ENCODE measurements at regions of chr2 and their contacts with region 1.

Region 1: DNA sequence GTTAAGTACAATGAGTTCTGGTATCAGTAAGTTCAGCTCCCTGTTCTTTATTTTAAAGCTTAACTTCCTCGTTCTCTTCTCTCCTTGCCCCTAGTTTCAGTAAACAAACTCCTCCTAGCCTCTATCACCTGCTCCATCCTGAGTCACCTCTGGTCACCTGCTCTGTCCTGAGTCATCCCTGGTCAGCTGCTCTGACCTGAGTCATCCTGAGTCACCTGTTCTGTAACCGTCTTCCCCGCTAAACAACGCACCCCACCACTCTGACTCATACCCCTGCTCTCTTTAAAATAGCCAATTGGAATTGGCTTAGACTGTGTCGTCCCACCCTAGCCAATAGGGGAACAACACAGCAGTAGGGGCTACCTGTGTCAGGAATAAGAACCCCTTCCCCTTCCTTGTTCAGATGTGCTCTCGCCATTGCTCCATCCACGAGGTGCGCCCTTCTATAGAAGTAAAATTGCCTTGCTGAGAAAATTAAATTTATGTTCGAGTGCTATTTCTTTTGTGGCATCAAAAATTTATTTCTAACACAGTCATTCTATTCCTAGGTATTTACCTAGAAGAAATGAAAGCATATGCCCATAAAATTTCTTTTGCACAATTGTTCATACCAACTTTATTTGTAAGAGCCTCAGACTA is 24.9 kb upstream of the RMND5A start:
- DNase-seq: no peak
- ATAC-seq: no peak
- H3K4me3 ChIP-seq: no peak overlapping the region
- H3K27ac ChIP-seq: no peak overlapping the region
- H3K4me1 ChIP-seq: no peaks in the 10 kb centered on the region
- H3K27me3 ChIP-seq: no peaks in the 10 kb centered on the region

Region 2: GRCh38 chr2:86556198-86556899 is 138.8 kb before region 1 on chr2:
- intact Hi-C with region 1: no loop called
- DNase-seq: peak in 1 of 3 donors; percentile 47
- ATAC-seq: no peak
- H3K4me3 ChIP-seq: no peak overlapping the region
- H3K27ac ChIP-seq: no peak overlapping the region
- H3K4me1 ChIP-seq: peaks cover 8% of the 10 kb centered on the region
- H3K27me3 ChIP-seq: no peaks in the 10 kb centered on the region

Region 3: DNA sequence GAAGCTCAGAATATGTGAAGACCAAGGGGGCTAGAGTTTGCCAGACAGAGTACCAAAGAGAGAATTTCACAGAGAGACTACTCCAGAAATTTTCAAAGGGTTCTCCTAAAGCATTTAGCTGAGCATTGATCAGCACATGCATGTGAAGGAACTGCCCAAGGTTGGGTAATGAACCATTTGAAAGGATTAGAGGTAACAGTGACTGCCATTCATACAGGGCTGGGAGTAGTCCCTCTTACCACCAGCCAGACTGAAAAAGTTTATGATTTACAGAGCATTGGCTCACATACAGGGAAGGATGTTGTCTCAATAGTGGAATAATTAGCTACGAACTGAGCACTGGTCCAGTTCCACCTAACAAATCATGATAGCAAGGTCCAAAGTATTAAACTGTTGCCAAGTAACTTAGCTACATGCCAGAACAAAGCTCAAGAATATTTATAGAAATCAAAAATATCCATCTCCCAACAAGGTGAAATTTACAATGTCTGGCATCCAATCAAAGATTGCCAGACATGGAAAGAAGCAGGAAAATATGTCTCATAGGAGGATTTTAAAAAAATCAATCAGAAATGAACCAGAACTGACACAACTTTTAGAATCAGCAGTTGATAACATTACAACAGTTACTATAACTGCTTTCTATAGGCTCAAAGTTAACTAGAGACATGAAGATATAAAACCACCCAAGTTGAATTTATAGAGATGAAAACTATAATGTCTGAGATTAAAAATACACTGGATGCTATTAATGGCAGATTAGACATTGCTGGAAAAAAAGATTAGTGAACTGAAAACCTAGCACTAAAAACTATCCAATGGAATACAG is 45.8 kb before region 1 on chr2:
- intact Hi-C with region 1: loop called in 1 of 4 experiments (anchors 10 kb)
- DNase-seq: no peak
- ATAC-seq: no peak
- H3K4me3 ChIP-seq: no peak overlapping the region
- H3K27ac ChIP-seq: no peak overlapping the region
- H3K4me1 ChIP-seq: no peaks in the 10 kb centered on the region
- H3K27me3 ChIP-seq: no peaks in the 10 kb centered on the region

Measured in right cardiac atrium (tissue), 5 donors.